Heart right ventricle (tissue), 16 donors: ENCODE measurements at regions of chr4 and their contacts with region 1.

Region 1: GRCh38 chr4:17544205-17544604 is 29.2 kb downstream of the CLRN2 start:
- DNase-seq: no peak
- ATAC-seq: peak in 1 of 8 donors; percentile 27
- H3K4me3 ChIP-seq: no peak overlapping the region
- H3K27ac ChIP-seq: no peak overlapping the region
- H3K4me1 ChIP-seq: peaks cover 0 to 10% (median 3%) of the 10 kb centered on the region in 9 donors
- H3K27me3 ChIP-seq: peaks cover 0 to 5% (median 0%) of the 10 kb centered on the region in 7 donors
- CTCF ChIP-seq: no peak

Region 2: GRCh38 chr4:17511950-17512795 is 32.0 kb before region 1 on chr4 and contains the start of gene QDPR:
- intact Hi-C with region 1: loop called in 1 of 10 experiments (anchors 5 kb)
- DNase-seq: peak; percentile 81 to 90
- ATAC-seq: peak; percentile 88 to 96 (median 95)
- H3K4me3 ChIP-seq: peak within 1 kb of the TSS; percentile 62 to 93 (median 80)
- H3K27ac ChIP-seq: peak within 1 kb of the TSS in 9 of 10 donors; percentile 64 to 85 (median 77)
- H3K4me1 ChIP-seq: peaks cover 0 to 27% (median 19%) of the 10 kb centered on the region in 9 donors
- H3K27me3 ChIP-seq: peaks cover 0 to 18% (median under 1%) of the 10 kb centered on the region in 7 donors
- CTCF ChIP-seq: peak in 8 of 9 donors; percentile 5 to 67 (median 44)
- total RNA-seq, gene QDPR: 43.4 to 68.4 (median 58.4) TPM

Region 3: GRCh38 chr4:17576932-17577665 is 32.9 kb after region 1 on chr4 and contains the start of gene LAP3:
- intact Hi-C with region 1: loop called in 1 of 10 experiments (anchors 2 kb)
- DNase-seq: peak; percentile 98 to 99
- ATAC-seq: peak; percentile 96 to 100 (median 98)
- H3K4me3 ChIP-seq: peak within 1 kb of the TSS; percentile 58 to 100 (median 78)
- H3K27ac ChIP-seq: peak within 1 kb of the TSS; percentile 82 to 99 (median 94)
- H3K4me1 ChIP-seq: peaks cover 0 to 52% (median 30%) of the 10 kb centered on the region in 9 donors
- H3K27me3 ChIP-seq: no peaks in the 10 kb centered on the region
- CTCF ChIP-seq: no peak
- total RNA-seq, gene LAP3: 55.5 to 222 (median 65.4) TPM

Region 4: GRCh38 chr4:17636696-17637622 is 92.8 kb after region 1 on chr4:
- intact Hi-C with region 1: loop called in 9 of 10 experiments (anchors 1 to 5 kb)
- DNase-seq: peak; percentile 67 to 80
- ATAC-seq: peak; percentile 84 to 91 (median 86)
- H3K4me3 ChIP-seq: no peak overlapping the region
- H3K27ac ChIP-seq: no peak overlapping the region
- H3K4me1 ChIP-seq: peaks cover 0 to 7% (median 0%) of the 10 kb centered on the region in 9 donors
- H3K27me3 ChIP-seq: no peaks in the 10 kb centered on the region
- CTCF ChIP-seq: peak; percentile 80 to 93 (median 89)

Region 5: DNA sequence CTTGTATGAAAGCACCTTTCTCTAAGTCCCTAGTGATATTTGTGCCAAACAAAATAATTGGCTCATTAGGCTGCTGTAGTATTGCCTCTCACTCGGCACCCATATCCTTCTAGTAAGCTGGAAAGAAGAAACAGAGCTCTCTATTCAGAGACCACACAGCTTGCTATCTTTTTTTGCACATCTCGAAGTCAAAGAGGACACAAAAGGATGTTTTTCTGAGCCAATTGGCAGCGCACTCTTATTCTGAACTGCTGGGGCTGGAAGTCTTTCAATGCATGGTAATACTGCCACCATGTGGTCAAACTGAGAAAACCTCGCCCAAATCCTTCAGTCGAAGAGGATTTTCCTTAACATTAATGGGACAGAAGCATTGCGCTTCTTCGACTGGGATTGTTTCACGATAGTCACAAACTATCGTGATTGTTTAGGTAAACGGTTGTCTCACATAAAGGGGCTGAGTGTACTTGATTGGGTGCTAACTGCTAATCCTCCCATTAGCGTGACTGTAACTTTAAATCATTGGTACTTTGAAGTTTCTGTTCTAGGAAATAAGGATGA is 1049.3 kb after region 1 on chr4:
- intact Hi-C with region 1: loop called in 8 of 10 experiments (anchors 5 to 10 kb)
- DNase-seq: peak in 1 of 2 donors; percentile 55
- ATAC-seq: peak in 6 of 8 donors; percentile 57 to 68 (median 61)
- H3K4me3 ChIP-seq: no peak overlapping the region
- H3K27ac ChIP-seq: no peak overlapping the region
- H3K4me1 ChIP-seq: peaks cover 0 to 6% (median 0%) of the 10 kb centered on the region in 9 donors
- H3K27me3 ChIP-seq: peaks cover 0 to 6% (median 0%) of the 10 kb centered on the region in 7 donors
- CTCF ChIP-seq: peak; percentile 75 to 91 (median 82)